Activated CD4-positive, alpha-beta memory T cell treated with anti-CD3 and anti-CD28 coated beads for 36 hours (primary cell): ENCODE measurements at regions of chr2 and their contacts with region 1.

Region 1: GRCh38 chr2:39124000-39124745 is 3.3 kb upstream of the SOS1 start:
- DNase-seq: peak; percentile 97
- H3K4me3 Mint-ChIP-seq: peak overlapping the region; percentile 80
- H3K27ac Mint-ChIP-seq: peak overlapping the region; percentile 95
- H3K4me1 Mint-ChIP-seq: peaks cover 42% of the 10 kb centered on the region
- H3K27me3 Mint-ChIP-seq: no peaks in the 10 kb centered on the region

Region 2: DNA sequence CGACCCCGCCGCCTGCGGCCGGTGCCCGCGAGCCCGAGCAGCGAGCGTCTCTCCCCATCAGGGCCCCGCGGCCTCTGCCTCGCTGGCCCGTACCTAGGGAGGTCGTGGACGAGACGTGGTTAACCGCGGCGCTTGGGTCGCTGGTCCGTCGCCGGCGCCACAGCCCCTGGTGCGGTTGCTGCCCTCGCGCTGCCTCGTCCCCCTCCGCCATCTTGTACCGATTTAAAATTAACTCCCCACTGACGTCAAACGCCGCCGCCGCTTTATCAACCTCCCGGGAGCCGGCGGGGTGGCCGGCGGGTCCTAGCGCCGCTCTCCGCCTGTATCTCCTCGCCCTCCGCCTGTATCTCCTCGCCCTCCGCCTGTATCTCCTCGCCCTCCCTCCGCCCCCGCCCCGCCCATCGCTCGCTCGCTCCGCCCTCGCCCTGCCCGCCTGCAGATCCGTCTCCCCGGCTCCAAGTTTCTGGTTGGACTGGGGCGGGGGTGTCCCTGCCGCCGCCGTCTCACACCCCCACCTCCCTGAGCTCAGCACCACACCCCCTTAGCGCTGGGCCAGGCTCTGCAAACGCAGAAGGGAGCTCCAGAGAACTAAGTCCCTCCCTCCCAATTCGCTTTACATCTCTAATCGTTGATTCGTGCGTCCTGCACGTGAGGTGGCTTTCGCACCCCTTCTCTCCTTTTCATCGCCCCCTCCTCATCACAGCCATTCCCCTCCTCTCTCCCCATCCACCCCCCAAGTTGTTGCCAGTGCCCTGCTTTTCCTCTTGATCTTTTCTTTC is 746.9 kb before region 1 on chr2 and contains the start of gene ATL2:
- CTCF ChIA-PET with region 1: no interaction called
- POLR2A ChIA-PET with region 1: no interaction called
- intact Hi-C with region 1: loop called (anchors 5 kb)
- DNase-seq: peak; percentile 97
- H3K4me3 Mint-ChIP-seq: peak within 1 kb of the TSS; percentile 83
- H3K27ac Mint-ChIP-seq: peak within 1 kb of the TSS; percentile 81
- H3K4me1 Mint-ChIP-seq: peaks cover 55% of the 10 kb centered on the region
- H3K27me3 Mint-ChIP-seq: no peaks in the 10 kb centered on the region
- total RNA-seq, gene ATL2: 51.3 to 53.9 TPM

Region 3: DNA sequence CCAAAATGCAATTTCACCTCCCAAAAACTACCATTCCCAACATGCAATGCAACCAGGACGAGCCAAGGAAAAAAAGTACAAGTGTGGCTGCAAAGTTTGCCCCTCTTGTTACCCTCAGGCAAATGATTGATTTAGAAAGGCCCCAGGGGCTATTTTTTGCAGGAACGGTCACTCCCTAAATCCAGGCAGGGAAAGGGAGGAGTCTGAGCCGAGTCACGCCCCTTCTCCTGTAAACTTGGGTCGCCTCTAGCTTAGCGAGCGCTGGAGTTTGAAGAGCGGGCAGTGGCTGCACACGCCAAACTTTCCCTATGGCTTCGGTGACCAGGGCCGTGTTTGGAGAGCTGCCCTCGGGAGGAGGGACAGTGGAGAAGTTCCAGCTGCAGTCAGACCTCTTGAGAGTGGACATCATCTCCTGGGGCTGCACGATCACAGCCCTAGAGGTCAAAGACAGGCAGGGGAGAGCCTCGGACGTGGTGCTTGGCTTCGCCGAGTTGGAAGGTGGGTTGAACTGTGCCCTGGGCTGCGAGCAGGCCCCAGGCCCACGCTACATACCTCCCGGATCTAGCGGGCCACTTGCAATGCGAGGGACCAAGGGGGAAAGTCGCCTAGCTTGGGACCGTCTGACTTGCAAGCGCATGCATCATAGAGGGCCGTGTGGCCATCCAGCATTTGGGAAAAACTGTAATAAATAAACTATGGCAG is 458.2 kb before region 1 on chr2 and contains the start of gene GALM:
- CTCF ChIA-PET with region 1: no interaction called
- POLR2A ChIA-PET with region 1: no interaction called
- intact Hi-C with region 1: loop called (anchors 5 kb)
- DNase-seq: peak; percentile 82
- H3K4me3 Mint-ChIP-seq: peak within 1 kb of the TSS; percentile 85
- H3K27ac Mint-ChIP-seq: peak within 1 kb of the TSS; percentile 97
- H3K4me1 Mint-ChIP-seq: peaks cover 68% of the 10 kb centered on the region
- H3K27me3 Mint-ChIP-seq: no peaks in the 10 kb centered on the region
- total RNA-seq, gene GALM: 90.2 to 95.3 TPM

Region 4: DNA sequence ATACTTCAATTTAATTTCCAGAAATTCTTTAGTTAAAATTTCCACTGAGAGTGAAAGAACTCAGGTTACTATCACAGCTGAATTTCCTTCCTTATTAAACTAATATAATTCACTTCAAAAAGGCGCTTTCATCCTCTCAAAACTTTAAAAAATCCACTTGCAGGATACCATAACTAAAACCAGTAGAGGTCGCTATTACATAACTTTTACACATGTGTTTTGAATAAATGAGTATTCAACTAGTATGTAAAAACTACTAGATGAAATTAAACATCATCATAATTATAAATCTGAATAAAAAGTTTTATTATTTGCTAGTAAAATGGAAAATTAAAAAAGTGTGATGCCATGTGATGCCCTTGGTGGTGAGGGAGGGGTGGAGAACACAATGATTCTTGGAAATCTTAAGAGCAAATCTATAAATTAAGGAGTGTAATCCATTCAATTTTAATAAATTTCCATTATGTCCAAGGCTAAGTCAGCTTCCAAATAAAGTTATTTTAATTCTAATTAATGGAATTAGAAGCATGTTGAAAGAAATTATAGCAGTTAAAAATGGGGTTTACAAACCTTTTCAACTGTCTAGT is 64.7 kb before region 1 on chr2:
- CTCF ChIA-PET with region 1: interaction called, 28 read pairs
- POLR2A ChIA-PET with region 1: interaction called, 3 read pairs
- intact Hi-C with region 1: loop called (anchors 2 kb)
- DNase-seq: no peak
- H3K4me3 Mint-ChIP-seq: no peak overlapping the region
- H3K27ac Mint-ChIP-seq: no peak overlapping the region
- H3K4me1 Mint-ChIP-seq: no peaks in the 10 kb centered on the region
- H3K27me3 Mint-ChIP-seq: no peaks in the 10 kb centered on the region

Region 5: GRCh38 chr2:39136799-39137198 is 12.6 kb after region 1 on chr2:
- CTCF ChIA-PET with region 1: interaction called, 8 read pairs
- POLR2A ChIA-PET with region 1: interaction called, 4 read pairs
- intact Hi-C with region 1: loop called (anchors 1 kb)
- DNase-seq: no peak
- H3K4me3 Mint-ChIP-seq: peak overlapping the region; percentile 26
- H3K27ac Mint-ChIP-seq: peak overlapping the region; percentile 25
- H3K4me1 Mint-ChIP-seq: peaks cover 57% of the 10 kb centered on the region
- H3K27me3 Mint-ChIP-seq: no peaks in the 10 kb centered on the region

Region 6: DNA sequence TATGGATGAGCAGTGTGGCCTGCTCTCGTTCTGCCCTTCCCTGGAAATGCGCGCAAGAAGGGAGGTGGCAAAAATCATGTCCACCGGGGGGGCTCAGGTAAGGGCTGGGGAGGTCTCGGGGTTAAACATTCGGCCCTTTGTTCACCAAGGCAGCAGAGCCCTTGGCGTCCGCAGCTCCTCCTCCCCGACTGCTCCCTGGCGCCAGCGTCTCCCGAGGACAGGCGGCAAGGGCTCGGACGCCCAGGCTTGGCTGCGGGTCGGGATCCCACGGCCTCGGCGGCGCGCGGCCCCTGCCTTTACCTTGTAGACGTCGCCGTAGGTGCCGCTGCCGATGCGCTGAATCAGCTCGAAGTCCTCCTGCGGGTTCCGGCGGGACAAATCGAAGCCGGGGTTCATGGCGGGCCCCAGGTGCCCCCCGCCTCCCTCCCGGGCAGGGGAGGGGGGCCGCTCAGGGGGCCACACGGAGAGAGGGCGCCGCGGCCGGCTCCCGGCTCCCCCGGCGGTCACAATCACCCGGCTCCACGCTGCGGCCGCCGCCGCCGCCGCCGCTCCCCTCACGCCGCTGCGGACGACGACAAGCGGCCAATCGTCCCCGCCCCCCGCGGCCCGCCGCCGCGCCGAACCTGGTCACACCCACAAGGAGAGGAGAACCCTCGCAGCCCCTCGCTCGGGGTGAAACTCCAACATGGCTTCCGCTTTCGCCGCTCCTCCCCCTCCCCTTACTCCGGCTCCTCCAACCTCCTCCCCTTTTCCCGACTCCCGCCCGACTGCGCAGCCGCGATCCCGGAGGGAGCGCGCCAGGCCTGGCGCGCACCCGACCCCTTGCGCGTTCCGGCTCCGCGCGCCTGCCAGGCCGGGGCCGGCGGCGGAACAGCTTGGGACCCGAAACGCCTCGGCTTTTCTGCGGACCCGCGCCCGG is 312.7 kb after region 1 on chr2 and contains the start of gene MAP4K3:
- CTCF ChIA-PET with region 1: no interaction called
- POLR2A ChIA-PET with region 1: no interaction called
- intact Hi-C with region 1: loop called (anchors 2 kb)
- DNase-seq: peak; percentile 87
- H3K4me3 Mint-ChIP-seq: peak within 1 kb of the TSS; percentile 84
- H3K27ac Mint-ChIP-seq: peak within 1 kb of the TSS; percentile 82
- H3K4me1 Mint-ChIP-seq: peaks cover 65% of the 10 kb centered on the region
- H3K27me3 Mint-ChIP-seq: no peaks in the 10 kb centered on the region
- total RNA-seq, gene MAP4K3: 9.9 to 10.1 TPM

Region 7: DNA sequence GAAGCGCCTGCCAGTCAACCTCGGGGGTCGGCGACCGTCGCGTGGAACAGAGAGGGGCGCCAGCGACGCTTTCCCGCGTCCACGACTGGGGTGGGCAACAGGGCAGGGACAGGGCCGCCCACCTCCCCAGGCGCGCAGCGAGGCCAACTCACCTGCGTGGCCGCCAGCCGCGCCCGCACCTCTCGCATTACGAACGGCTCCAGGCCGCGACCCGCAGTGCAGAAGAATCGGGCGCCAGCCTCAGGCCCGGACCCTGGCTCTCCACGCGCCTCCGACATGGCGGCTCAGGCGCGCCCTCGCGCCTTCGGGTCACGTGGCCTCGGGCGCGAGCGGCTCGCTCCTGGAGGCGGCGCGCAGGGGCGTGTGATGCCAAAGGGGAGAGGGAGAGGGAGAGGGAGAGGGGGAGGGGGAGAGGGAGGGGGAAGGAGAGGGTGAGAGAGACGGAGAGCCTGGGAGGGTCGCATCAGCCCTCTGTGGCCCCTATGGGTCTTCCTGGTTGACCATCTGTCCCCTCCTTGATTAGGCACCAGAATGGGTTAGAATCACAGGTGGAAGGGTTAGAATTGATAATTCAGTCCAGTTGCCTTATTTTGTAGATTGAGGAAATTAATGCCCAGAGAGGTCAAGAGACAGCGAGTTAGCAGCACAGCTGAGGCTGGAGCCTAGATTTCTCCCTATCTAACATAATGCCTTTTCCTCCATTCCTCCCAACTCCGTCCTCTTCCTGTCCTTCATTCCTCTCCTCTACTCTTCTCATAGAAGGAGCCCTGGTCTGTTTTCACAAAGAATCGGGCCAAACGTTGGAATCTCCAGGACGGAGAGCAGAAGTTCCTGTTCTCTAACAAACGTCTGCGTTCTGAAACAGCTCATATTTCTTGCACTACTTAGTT is 655.0 kb after region 1 on chr2 and contains the start of gene THUMPD2:
- CTCF ChIA-PET with region 1: no interaction called
- POLR2A ChIA-PET with region 1: no interaction called
- intact Hi-C with region 1: loop called (anchors 10 kb)
- DNase-seq: peak; percentile 77
- H3K4me3 Mint-ChIP-seq: peak within 1 kb of the TSS; percentile 85
- H3K27ac Mint-ChIP-seq: peak within 1 kb of the TSS; percentile 75
- H3K4me1 Mint-ChIP-seq: peaks cover 54% of the 10 kb centered on the region
- H3K27me3 Mint-ChIP-seq: no peaks in the 10 kb centered on the region
- total RNA-seq, gene THUMPD2: 10.6 to 11.5 TPM